ENCODE measurements at regions of chr7 and their contacts with region 1.

Region 1: GRCh38 chr7:12490117-12490688 is 80.3 kb upstream of the SCIN start:
- DNase-seq: peak; percentile 33 to 49
- ATAC-seq: peak; percentile 76 to 80; a peak in 5 of 6 replicates
- H3K4me3 ChIP-seq: no peak overlapping the region
- H3K27ac ChIP-seq: no peak overlapping the region
- H3K4me1 ChIP-seq: no peaks in the 10 kb centered on the region
- CTCF ChIP-seq: peak; percentile 83
- EP300 ChIP-seq: no peak
- POLR2A ChIP-seq: no peak
- RAD21 ChIP-seq: peak; percentile 70 to 80

Region 2: GRCh38 chr7:12389089-12389700 is 101.0 kb before region 1 on chr7:
- CTCF ChIA-PET with region 1: interaction called, 10 read pairs
- POLR2A ChIA-PET with region 1: interaction called, 3 read pairs
- DNase-seq: peak; percentile 36 to 69
- ATAC-seq: peak; percentile 88 to 93; a peak in 5 of 6 replicates
- H3K4me3 ChIP-seq: no peak overlapping the region
- H3K27ac ChIP-seq: no peak overlapping the region
- H3K4me1 ChIP-seq: no peaks in the 10 kb centered on the region
- CTCF ChIP-seq: peak; percentile 84
- EP300 ChIP-seq: no peak
- POLR2A ChIP-seq: no peak
- RAD21 ChIP-seq: peak; percentile 71 to 73

Region 3: DNA sequence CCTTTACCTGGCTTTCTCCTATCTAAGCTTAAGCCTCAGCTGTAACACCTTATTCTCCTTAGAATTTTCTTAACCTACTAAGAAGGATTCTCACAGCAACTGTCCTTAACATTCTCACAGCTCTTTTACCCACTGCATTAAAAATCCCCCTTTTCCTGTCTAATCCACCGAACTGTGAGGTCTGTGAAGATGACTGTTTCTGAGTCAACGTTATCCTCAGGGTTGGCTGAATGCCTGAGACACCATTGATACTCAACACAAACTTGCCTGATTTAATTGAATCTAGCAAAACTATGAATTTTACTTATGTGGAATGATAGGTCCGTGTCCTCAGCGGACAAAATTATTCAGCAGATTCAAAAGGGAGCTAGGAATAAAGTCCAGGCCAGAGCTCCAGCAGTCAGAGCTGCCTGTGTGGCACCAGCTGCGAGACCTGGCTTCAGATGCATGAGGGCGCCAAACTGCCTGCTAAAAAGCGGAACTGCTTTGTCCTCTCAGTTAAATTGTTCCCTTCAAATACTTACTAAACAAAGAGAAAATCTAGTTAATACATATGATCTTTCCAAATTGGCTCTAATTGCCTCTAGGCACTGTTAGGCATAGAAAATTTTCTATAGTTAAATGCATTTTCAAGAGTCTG is 53.2 kb before region 1 on chr7:
- CTCF ChIA-PET with region 1: interaction called, 22 read pairs
- POLR2A ChIA-PET with region 1: no interaction called
- DNase-seq: peak in 1 of 2 experiments; percentile 20
- ATAC-seq: peak; percentile 54 to 72; a peak in 3 of 6 replicates
- H3K4me3 ChIP-seq: no peak overlapping the region
- H3K27ac ChIP-seq: no peak overlapping the region
- H3K4me1 ChIP-seq: no peaks in the 10 kb centered on the region; the same call in 2 of the 3 replicates
- CTCF ChIP-seq: peak; percentile 29; the same call in 2 of the 3 replicates
- EP300 ChIP-seq: no peak
- POLR2A ChIP-seq: no peak
- RAD21 ChIP-seq: peak; percentile 14; a peak in 1 of 5 replicates

Region 4: DNA sequence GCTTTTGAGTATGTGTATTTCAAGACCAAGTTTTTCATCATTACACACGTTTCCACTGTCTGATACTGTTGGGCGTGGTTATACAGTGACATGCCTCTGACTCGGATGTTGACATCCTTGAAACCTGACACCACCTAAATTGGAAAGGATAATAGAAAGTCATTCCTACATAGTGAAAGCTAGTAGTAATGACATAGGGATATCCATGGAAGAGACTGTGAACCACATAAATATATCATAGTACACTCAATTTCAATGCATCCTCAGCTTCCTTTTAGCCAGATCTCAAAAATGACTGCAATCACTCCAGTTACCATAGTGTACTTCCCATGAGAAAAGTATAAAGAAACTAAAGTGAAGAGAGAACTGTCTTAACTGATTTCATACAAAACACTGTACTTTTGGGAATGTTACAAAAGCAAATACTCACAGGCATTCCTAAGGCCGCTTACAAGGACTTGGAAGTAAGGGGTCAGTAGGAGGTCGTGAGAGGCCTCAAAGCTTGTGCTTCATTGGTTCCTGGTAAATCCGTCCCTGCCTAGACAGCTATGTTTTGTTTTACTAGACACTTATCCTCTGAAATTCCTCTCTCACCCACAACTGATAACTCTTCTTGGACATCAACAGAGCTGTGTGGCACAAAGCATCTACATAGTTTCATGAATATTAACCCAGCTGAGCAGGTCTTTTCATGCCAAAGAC is 14.7 kb before region 1 on chr7:
- CTCF ChIA-PET with region 1: interaction called, 19 read pairs
- POLR2A ChIA-PET with region 1: no interaction called
- DNase-seq: peak in 1 of 2 experiments; percentile 50
- ATAC-seq: peak; percentile 58 to 62; a peak in 4 of 6 replicates
- H3K4me3 ChIP-seq: no peak overlapping the region
- H3K27ac ChIP-seq: no peak overlapping the region
- H3K4me1 ChIP-seq: no peaks in the 10 kb centered on the region
- CTCF ChIP-seq: no peak
- EP300 ChIP-seq: no peak
- POLR2A ChIP-seq: no peak
- RAD21 ChIP-seq: no peak